ENCODE measurements at regions of chr4 and their contacts with region 1.

Region 1: GRCh38 chr4:17356926-17357325 is 155.0 kb downstream of the QDPR start:
- DNase-seq: no peak
- CTCF ChIP-seq: no peak

Region 2: GRCh38 chr4:17251101-17251500 is 105.8 kb before region 1 on chr4:
- in situ Hi-C with region 1: no loop called
- DNase-seq: no peak
- CTCF ChIP-seq: no peak

Region 3: GRCh38 chr4:17447675-17448298 is 90.9 kb after region 1 on chr4:
- in situ Hi-C with region 1: loop called (anchors 10 kb)
- DNase-seq: peak; percentile 55
- CTCF ChIP-seq: peak; percentile 59